PC-3 (cell line): ENCODE measurements at regions of chr20 and their contacts with region 1.

Region 1: GRCh38 chr20:37804584-37805566 is 98.1 kb upstream of the VSTM2L start:
- DNase-seq: no peak
- ATAC-seq: no peak
- H3K4me3 ChIP-seq: no peak overlapping the region
- H3K27ac ChIP-seq: no peak overlapping the region
- H3K4me1 ChIP-seq: peaks cover 4% of the 10 kb centered on the region; the same call in 1 of the 2 replicates
- H3K27me3 ChIP-seq: no peaks in the 10 kb centered on the region
- CTCF ChIP-seq: no peak

Region 2: DNA sequence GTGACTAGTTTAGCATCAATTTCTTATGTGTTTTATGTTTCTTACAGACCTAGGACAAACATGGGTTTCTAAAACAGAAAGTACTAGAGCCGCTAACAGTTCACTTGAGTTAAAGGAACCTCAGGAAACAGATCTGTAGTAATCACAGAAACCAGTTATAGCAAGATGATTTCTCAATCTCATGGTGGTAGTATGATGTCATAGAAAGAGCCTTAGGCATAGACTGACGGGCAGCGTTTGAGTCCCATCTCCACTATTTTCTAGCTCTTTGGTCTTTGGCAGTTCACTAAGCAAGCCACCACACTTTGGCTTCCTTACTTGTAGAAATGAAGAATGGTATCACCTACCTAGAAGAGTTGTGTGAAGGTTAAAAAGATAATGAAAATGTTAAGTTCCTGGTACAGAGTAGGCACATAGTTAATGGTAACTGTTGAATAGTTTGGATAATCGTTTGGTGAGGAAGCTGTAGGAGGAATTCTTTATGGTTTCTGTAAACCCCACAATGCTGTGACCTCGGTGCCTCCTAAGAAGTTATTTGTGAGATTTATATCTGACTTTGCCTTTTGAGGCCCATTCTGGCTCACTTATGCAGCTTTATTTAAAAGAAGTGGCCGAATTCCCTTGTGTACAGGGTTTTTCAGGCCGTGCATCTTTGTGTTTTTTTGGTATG is 89.7 kb before region 1 on chr20:
- CTCF ChIA-PET with region 1: no interaction called
- POLR2A ChIA-PET with region 1: no interaction called
- intact Hi-C with region 1: no loop called
- DNase-seq: no peak
- ATAC-seq: no peak
- H3K4me3 ChIP-seq: no peak overlapping the region
- H3K27ac ChIP-seq: no peak overlapping the region
- H3K4me1 ChIP-seq: peaks cover 12% of the 10 kb centered on the region; the same call in 1 of the 2 replicates
- H3K27me3 ChIP-seq: no peaks in the 10 kb centered on the region
- CTCF ChIP-seq: no peak

Region 3: DNA sequence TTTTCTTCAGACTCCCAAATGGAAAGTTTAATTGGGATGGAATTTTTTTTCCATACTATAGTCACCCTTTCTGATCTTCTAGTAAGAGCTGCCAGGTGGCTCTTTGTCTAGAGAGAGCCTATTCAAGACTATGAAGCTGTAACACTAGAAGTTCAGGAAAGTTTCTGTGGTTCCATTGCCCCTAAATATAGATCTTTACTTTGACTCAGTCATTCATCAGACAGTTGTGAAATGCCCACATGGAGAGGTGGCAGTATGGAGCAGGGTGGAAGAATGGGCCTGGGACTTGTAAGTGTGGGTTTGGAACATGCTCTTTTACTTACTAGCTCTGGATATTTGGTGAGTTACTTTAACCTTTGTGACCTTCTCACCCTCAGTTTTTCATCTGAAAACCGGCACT is 23.2 kb before region 1 on chr20:
- CTCF ChIA-PET with region 1: no interaction called
- POLR2A ChIA-PET with region 1: interaction called, 10 read pairs
- intact Hi-C with region 1: no loop called
- DNase-seq: peak; percentile 42
- ATAC-seq: no peak
- H3K4me3 ChIP-seq: no peak overlapping the region
- H3K27ac ChIP-seq: no peak overlapping the region
- H3K4me1 ChIP-seq: no peaks in the 10 kb centered on the region
- H3K27me3 ChIP-seq: no peaks in the 10 kb centered on the region
- CTCF ChIP-seq: peak; percentile 46